HAP-1 (cell line): ENCODE measurements at regions of chr22 and their contacts with region 1.

Region 1: GRCh38 chr22:36123673-36124630 is 36.6 kb downstream of the APOL3 start:
- DNase-seq: peak; percentile 95 to 96
- H3K4me3 ChIP-seq: no peak overlapping the region
- H3K4me1 ChIP-seq: peaks cover 11% of the 10 kb centered on the region
- H3K27me3 ChIP-seq: peaks cover 3% of the 10 kb centered on the region; the same call in 1 of the 2 replicates

Region 2: DNA sequence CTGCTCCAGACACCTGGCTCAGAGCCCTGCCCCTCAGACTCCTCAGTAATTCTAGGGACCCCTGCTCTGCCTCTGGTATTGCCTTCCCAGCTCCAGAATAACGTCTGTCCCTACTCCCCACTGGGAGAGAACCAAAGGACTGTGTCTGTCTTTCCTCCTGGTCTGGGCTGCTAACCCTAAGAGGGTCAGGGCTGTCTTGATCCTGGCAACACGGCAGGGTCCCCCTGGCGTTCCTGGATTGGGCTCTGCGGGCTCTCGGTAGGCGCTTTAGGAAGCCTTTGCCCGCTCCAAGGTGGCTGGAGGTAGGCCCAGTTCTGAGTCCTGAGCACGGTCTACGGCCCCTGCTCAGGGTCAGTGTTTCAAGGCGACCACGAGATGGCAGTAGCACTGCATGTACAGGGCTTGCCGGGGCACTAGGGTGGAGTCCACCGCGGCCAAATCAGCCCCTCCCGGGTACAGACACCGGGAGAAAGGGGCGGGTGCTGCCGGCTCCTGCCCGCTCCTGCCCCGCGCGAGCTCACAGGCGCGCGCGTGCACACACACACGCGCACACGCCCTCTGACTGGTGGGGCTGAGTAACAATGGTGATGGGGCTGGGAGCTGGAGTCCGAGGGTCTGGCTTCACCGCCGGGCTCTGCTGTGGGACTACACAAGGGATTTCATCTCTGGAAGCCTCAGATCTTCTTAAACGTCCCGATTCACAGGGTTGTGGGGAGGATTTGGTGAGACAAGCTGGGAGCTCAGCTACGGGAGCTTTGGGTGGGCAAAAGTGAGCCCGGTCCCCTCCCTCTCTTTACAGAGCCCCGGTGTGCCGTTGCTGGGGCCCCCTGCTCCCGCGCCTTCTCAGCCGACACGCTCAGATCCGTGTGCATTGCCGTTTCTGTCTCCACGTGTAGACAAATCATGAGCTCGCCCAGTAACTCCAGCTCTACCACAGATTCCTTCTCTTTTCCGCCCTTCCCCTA is 773.1 kb before region 1 on chr22:
- in situ Hi-C with region 1: loop called (anchors 5 kb)
- DNase-seq: peak; percentile 84 to 96
- H3K4me3 ChIP-seq: peak overlapping the region; percentile 30
- H3K4me1 ChIP-seq: peaks cover 10% of the 10 kb centered on the region
- H3K27me3 ChIP-seq: no peaks in the 10 kb centered on the region

Region 3: DNA sequence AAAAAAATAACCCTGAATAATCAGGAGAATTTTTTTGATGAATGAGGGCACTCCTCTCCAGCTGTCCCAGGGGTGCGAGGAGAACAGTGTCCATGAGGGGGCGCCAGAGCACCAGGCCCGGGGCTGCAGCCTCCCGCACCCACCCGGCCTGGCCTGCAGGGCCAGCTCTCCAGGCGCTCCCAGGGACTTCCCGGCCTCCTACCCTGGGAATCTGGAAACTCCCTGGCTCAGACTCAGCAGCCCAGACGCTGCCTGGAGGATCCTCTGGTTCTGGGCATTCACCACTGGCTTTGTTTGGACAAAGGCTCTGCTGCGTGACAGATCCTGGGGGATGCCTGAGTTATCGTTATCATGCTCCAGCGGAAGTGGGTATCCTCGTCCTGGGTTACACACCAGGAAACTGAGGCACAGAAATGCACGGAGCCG is 693.0 kb before region 1 on chr22:
- in situ Hi-C with region 1: loop called (anchors 10 kb)
- DNase-seq: peak; percentile 34 to 88
- H3K4me3 ChIP-seq: no peak overlapping the region
- H3K4me1 ChIP-seq: peaks cover 5% of the 10 kb centered on the region
- H3K27me3 ChIP-seq: no peaks in the 10 kb centered on the region

Region 4: GRCh38 chr22:35622191-35622913 is 501.6 kb before region 1 on chr22:
- in situ Hi-C with region 1: loop called (anchors 5 kb)
- DNase-seq: no peak
- H3K4me3 ChIP-seq: no peak overlapping the region
- H3K4me1 ChIP-seq: peaks cover 1% of the 10 kb centered on the region; the same call in 1 of the 2 replicates
- H3K27me3 ChIP-seq: 0 out of 2 replicates have a peak, but pooled peaks cover 3% of the 10 kb centered on the region

Region 5: GRCh38 chr22:36065775-36066559 is 58.0 kb before region 1 on chr22:
- in situ Hi-C with region 1: no loop called
- DNase-seq: peak; percentile 96 to 97
- H3K4me3 ChIP-seq: peak overlapping the region; percentile 31
- H3K4me1 ChIP-seq: peaks cover 11% of the 10 kb centered on the region
- H3K27me3 ChIP-seq: no peaks in the 10 kb centered on the region

Region 6: GRCh38 chr22:36088292-36088691 is 35.7 kb before region 1 on chr22:
- in situ Hi-C with region 1: no loop called
- DNase-seq: no peak
- H3K4me3 ChIP-seq: no peak overlapping the region
- H3K4me1 ChIP-seq: peaks cover 3% of the 10 kb centered on the region; the same call in 1 of the 2 replicates
- H3K27me3 ChIP-seq: no peaks in the 10 kb centered on the region